Activated naive CD4-positive, alpha-beta T cell treated with anti-CD3 and anti-CD28 coated beads for 36 hours (primary cell): ENCODE measurements at regions of chr18 and their contacts with region 1.

Region 1: GRCh38 chr18:63817441-63818051 is 42.3 kb downstream of the SERPINB7 start:
- DNase-seq: no peak
- H3K4me3 Mint-ChIP-seq: no peak overlapping the region
- H3K27ac Mint-ChIP-seq: no peak overlapping the region
- H3K4me1 Mint-ChIP-seq: no peaks in the 10 kb centered on the region
- H3K27me3 Mint-ChIP-seq: peaks cover 3% of the 10 kb centered on the region

Region 2: GRCh38 chr18:63758615-63759240 is 58.8 kb before region 1 on chr18:
- CTCF ChIA-PET with region 1: no interaction called
- intact Hi-C with region 1: no loop called
- DNase-seq: no peak
- H3K4me3 Mint-ChIP-seq: no peak overlapping the region
- H3K27ac Mint-ChIP-seq: no peak overlapping the region
- H3K4me1 Mint-ChIP-seq: no peaks in the 10 kb centered on the region
- H3K27me3 Mint-ChIP-seq: no peaks in the 10 kb centered on the region

Region 3: DNA sequence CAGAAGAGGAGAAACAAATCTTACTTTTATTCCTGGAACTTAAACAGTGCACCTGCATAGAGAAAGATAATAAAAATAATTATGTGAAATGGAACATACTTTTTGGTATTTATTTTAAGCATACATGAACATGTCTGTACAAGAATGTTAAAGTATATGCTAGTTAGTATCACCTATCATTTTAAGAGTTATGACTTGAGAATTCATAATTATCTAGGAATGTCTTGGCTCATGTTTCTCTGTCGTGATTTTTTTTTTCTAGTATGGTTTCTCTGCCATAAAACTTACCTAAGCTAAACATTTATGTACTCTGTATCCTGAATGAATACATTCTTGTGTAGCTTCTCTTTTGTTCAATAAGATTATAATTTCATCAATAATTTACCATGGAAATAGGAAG is 38.2 kb before region 1 on chr18:
- CTCF ChIA-PET with region 1: no interaction called
- intact Hi-C with region 1: loop called (anchors 1 kb)
- DNase-seq: no peak
- H3K4me3 Mint-ChIP-seq: no peak overlapping the region
- H3K27ac Mint-ChIP-seq: no peak overlapping the region
- H3K4me1 Mint-ChIP-seq: no peaks in the 10 kb centered on the region
- H3K27me3 Mint-ChIP-seq: no peaks in the 10 kb centered on the region